Heart right ventricle (tissue), 16 donors: ENCODE measurements at regions of chr19 and their contacts with region 1.

Region 1: GRCh38 chr19:44782729-44783128 is 5.0 kb downstream of the CBLC start:
- DNase-seq: no peak
- ATAC-seq: no peak
- H3K4me3 ChIP-seq: no peak overlapping the region
- H3K27ac ChIP-seq: no peak overlapping the region
- H3K4me1 ChIP-seq: peaks cover 0 to 11% (median 3%) of the 10 kb centered on the region in 9 donors
- H3K27me3 ChIP-seq: peaks cover 0 to 5% (median 4%) of the 10 kb centered on the region in 7 donors
- CTCF ChIP-seq: no peak

Region 2: GRCh38 chr19:44712864-44713515 is 69.7 kb before region 1 on chr19:
- intact Hi-C with region 1: loop called in 1 of 10 experiments (anchors 5 kb)
- DNase-seq: no peak
- ATAC-seq: peak in 1 of 8 donors; percentile 17
- H3K4me3 ChIP-seq: no peak overlapping the region
- H3K27ac ChIP-seq: no peak overlapping the region
- H3K4me1 ChIP-seq: peaks cover 0 to 19% (median 9%) of the 10 kb centered on the region in 9 donors
- H3K27me3 ChIP-seq: no peaks in the 10 kb centered on the region
- CTCF ChIP-seq: no peak

Region 3: DNA sequence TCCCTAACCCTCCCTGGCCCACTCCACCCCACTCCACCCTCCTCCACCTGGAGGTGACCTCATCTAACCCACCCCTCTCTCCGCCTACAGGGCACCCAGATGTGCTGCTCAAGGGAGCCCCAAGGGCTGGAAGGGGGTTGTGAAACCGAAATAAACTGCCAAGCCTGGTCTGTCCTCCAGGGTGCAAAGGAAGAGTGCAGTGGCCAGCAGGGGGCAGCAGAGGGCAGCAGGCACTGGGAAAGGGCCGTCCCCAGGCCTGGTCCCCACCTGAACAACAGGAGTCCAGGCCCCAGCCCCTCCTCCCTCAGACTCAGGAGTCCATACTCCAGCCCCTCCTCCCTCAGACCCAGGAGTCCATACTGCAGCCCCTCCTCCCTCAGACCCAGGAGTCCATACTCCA is 17.7 kb after region 1 on chr19:
- intact Hi-C with region 1: loop called in 1 of 10 experiments (anchors 2 kb)
- DNase-seq: peak; percentile 87 to 90
- ATAC-seq: peak; percentile 89 to 94 (median 91)
- H3K4me3 ChIP-seq: no peak overlapping the region
- H3K27ac ChIP-seq: no peak overlapping the region
- H3K4me1 ChIP-seq: peaks cover 0 to 27% (median 17%) of the 10 kb centered on the region in 9 donors
- H3K27me3 ChIP-seq: no peaks in the 10 kb centered on the region
- CTCF ChIP-seq: peak; percentile 88 to 95 (median 91)